ENCODE measurements at regions of chr7 and their contacts with region 1.

Region 1: DNA sequence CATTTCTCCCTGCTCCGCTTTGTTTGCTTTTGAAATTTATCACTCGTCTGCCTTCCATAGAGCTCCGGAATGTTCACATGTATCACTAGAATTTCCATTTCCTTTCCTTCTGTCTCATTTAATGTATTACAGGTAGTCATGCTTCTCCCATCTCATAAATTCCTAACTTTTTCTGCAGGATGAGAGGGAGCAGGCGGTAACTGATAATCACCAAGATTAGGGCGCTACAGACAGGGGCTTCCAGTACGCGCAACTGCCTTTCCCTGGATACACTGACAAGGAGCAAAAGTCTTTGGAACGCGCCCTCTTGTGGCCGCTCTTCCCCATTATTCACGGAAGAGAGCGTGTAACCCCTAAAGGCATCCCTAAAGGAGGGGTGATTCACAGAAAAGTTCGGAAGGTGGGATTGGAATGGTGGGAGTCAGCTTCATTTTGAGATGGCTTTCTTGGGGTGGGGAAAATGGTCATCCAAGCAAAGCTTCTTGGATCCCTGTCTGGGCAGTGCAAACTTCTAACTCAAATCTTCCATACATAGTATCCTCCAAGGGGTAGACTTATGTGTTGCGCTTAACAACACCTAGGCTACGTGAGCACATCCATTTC is 6.5 kb downstream of the INHBA start:
- DNase-seq: peak in 2 of 9 experiments; percentile 9 to 22
- ATAC-seq: no peak
- H3K4me3 ChIP-seq: no peak overlapping the region
- H3K4me3 Mint-ChIP-seq: no peak overlapping the region
- H3K27ac ChIP-seq: no peak overlapping the region
- H3K27ac Mint-ChIP-seq: no peak overlapping the region
- H3K4me1 ChIP-seq: peaks cover 5% of the 10 kb centered on the region
- H3K4me1 Mint-ChIP-seq: peaks cover 8% of the 10 kb centered on the region
- H3K27me3 ChIP-seq: peaks cover 0 to 4% of the 10 kb centered on the region in 2 experiments
- H3K27me3 Mint-ChIP-seq: peaks cover 49% of the 10 kb centered on the region
- CTCF ChIP-seq: peak; percentile 24

Region 2: DNA sequence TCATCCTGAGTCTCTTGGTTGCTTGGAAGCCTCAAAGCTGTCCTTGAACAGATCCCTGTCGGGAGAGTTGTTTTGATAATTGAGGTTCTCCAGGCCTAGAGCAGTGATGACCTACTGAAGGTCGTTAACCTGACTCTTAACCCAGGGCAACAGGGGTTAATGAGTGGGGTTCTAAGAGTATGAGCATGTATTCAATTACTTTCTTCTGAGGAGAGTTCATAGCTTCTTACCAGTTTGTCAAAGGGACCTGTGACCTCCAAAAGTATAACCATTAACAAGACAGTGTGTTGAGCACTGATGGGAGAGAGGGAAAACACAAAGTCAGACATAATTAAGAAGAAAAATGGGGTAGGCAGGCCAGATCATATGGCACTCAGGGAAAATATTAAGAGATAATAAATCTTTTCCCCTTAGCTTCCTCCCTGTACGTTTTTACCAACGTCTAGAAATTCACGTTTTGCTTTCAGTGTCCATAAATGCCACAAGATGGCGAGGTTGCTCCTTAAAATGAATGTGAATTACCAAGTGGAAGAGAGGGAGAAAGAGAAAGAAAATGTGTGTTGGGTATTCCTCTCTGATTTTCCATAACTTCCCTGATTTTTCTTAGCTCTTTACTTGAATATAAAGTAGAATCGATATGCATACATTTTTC is 1464.0 kb before region 1 on chr7:
- CTCF ChIA-PET with region 1: no interaction called
- POLR2A ChIA-PET with region 1: no interaction called
- intact Hi-C with region 1: loop called (anchors 5 to 10 kb)
- DNase-seq: peak in 2 of 9 experiments; percentile 20 to 42
- ATAC-seq: no peak
- H3K4me3 ChIP-seq: no peak overlapping the region
- H3K4me3 Mint-ChIP-seq: no peak overlapping the region
- H3K27ac ChIP-seq: no peak overlapping the region
- H3K27ac Mint-ChIP-seq: no peak overlapping the region
- H3K4me1 ChIP-seq: peaks cover 7% of the 10 kb centered on the region
- H3K4me1 Mint-ChIP-seq: peaks cover 6% of the 10 kb centered on the region
- H3K27me3 ChIP-seq: no peaks in the 10 kb centered on the region
- H3K27me3 Mint-ChIP-seq: no peaks in the 10 kb centered on the region
- CTCF ChIP-seq: peak; percentile 22

Region 3: DNA sequence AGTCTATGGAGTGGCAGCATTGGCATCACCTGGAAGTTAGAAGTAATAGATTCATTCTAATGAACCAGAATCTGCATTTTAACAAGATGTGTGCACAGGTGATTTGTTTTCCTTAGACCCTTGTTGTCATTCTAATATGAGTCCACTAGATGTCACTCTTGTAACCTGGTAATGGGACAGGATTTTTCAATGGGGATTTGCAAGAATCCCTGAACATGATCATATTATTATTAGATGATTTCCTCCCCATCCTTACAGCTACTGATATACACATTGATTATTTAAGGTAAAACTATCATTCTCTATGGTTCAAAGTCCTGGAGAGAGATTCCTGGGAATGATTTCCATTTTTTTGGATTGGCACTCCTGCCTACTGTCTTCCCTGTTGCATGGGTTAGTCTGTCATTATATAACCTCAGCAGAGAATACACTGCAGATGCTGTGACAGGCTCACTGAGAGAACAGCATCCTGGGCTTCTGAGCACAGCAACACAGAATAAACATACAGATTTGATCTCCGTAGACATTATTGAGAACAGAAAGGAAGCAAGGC is 1366.7 kb before region 1 on chr7:
- CTCF ChIA-PET with region 1: interaction called, 3 read pairs
- POLR2A ChIA-PET with region 1: no interaction called
- intact Hi-C with region 1: loop called in 1 of 2 experiments (anchors 5 kb)
- DNase-seq: peak in 2 of 9 experiments; percentile 28 to 38
- ATAC-seq: no peak
- H3K4me3 ChIP-seq: no peak overlapping the region
- H3K4me3 Mint-ChIP-seq: no peak overlapping the region
- H3K27ac ChIP-seq: no peak overlapping the region
- H3K27ac Mint-ChIP-seq: no peak overlapping the region
- H3K4me1 ChIP-seq: no peaks in the 10 kb centered on the region
- H3K4me1 Mint-ChIP-seq: no peaks in the 10 kb centered on the region
- H3K27me3 ChIP-seq: no peaks in the 10 kb centered on the region
- H3K27me3 Mint-ChIP-seq: no peaks in the 10 kb centered on the region
- CTCF ChIP-seq: peak; percentile 86

Measured in CD8-positive, alpha-beta T cell (primary cell).